ENCODE measurements at regions of chr2 and their contacts with region 1.

Region 1: DNA sequence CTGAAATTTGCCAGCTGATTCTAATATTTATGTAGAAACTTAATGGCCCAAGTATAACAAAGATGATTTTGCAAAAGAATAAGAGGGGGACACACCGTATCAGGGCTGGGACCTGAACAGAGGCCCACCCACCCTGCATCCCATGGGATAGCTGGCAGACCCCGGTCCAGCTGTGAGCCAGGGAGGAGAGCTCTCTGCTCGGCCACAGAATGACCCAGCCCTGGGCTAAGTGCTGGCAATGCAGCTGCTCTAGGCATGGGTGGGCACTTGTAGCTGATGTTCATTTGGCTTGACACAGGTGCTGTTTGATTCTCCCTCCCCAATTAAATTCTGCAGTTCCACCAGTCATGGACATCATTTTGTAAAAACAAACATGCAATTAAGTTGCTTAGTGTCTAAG is 522.8 kb upstream of the RAB6C start:
- DNase-seq: no peak
- H3K4me3 ChIP-seq: no peak overlapping the region
- H3K27ac ChIP-seq: no peak overlapping the region
- H3K4me1 ChIP-seq: no peaks in the 10 kb centered on the region
- H3K27me3 ChIP-seq: no peaks in the 10 kb centered on the region
- CTCF ChIP-seq: no peak

Region 2: GRCh38 chr2:129469871-129470270 is 13.2 kb after region 1 on chr2:
- intact Hi-C with region 1: loop called (anchors 1 kb)
- DNase-seq: no peak
- H3K4me3 ChIP-seq: no peak overlapping the region
- H3K27ac ChIP-seq: no peak overlapping the region
- H3K4me1 ChIP-seq: no peaks in the 10 kb centered on the region
- H3K27me3 ChIP-seq: no peaks in the 10 kb centered on the region
- CTCF ChIP-seq: no peak

Region 3: GRCh38 chr2:129518937-129519336 is 62.2 kb after region 1 on chr2:
- intact Hi-C with region 1: no loop called
- DNase-seq: no peak
- H3K4me3 ChIP-seq: no peak overlapping the region
- H3K27ac ChIP-seq: no peak overlapping the region
- H3K4me1 ChIP-seq: no peaks in the 10 kb centered on the region
- H3K27me3 ChIP-seq: no peaks in the 10 kb centered on the region
- CTCF ChIP-seq: no peak

Measured in tibial artery (tissue), 4 donors.